ENCODE measurements at regions of chr3 and their contacts with region 1.

Region 1: DNA sequence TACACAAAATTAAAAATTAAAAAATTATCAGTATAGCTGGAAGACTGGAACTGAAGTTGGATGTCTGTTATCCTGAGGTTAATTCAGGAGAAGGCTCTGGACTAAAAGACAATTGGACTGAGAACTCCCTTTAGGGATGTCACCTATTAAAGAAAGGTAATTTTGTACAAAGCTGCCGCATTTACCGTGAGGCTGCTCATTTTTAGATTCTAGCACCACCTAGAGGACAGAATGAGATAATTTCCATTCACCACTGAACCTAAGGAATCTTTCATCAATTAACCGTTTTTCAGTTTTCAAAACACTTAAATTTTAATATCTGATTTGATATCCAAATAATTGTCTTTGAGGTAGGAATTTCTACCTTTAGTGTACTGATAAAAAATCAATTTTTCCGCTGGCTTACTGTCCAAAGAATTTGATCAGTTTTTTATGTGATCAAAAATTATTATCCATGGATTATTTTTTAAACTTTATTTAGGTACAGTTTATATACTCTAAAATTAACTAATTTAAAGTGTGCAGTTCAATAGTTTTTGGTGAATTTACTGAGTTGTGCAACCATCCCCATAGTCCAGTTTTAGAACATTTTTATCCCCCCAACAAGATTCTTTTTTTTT is 106.7 kb upstream of the TNIK start:
- DNase-seq: peak; percentile 10
- H3K4me3 ChIP-seq: no peak overlapping the region
- H3K27ac ChIP-seq: no peak overlapping the region
- H3K27me3 ChIP-seq: no peaks in the 10 kb centered on the region
- CTCF ChIP-seq: peak; percentile 70

Region 2: DNA sequence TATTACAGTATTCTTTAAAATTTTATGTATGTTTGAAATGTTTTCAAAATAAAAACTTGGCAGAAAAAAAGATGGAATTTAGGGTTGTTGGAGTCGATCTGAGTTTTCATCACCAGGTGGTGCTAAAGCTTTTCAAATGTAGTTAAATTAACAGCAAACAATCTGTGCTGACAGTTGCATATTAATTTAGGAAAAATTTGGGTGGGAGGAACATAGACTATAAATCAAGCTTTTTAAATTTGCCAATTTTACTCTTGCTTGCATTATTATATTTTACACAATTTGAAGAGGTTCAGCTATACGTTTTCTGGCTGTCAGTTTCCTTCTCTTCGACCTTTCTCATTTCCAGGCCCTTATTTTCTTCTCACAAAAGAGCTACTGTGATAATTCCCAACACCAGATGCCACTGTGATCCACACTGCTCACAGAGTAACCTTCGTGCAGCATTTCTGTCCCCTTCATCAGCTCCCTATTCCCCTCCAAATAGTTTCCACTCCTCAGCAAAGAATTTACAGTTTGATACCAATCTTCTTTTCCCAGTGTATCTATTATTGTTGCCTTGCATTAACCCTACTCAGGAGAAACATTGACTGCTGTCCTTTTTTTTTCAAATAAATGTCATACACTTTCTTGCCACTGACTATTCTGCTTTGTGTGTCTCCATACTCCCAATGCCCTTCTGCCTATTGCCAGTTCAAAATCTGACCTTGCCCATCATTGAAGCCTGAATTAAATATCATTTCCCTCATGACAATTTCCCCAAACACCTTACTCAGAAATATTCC is 605.1 kb before region 1 on chr3:
- CTCF ChIA-PET with region 1: interaction called, 62 read pairs
- POLR2A ChIA-PET with region 1: no interaction called
- DNase-seq: peak; percentile 10
- H3K4me3 ChIP-seq: no peak overlapping the region
- H3K27ac ChIP-seq: no peak overlapping the region
- H3K27me3 ChIP-seq: no peaks in the 10 kb centered on the region
- CTCF ChIP-seq: peak; percentile 65

Region 3: GRCh38 chr3:171049861-171050444 is 517.0 kb before region 1 on chr3:
- CTCF ChIA-PET with region 1: interaction called, 30 read pairs
- POLR2A ChIA-PET with region 1: no interaction called
- DNase-seq: no peak
- H3K4me3 ChIP-seq: no peak overlapping the region
- H3K27ac ChIP-seq: no peak overlapping the region
- H3K27me3 ChIP-seq: no peaks in the 10 kb centered on the region
- CTCF ChIP-seq: peak; percentile 77

Region 4: GRCh38 chr3:171187706-171188290 is 379.1 kb before region 1 on chr3:
- CTCF ChIA-PET with region 1: interaction called, 63 read pairs
- POLR2A ChIA-PET with region 1: no interaction called
- DNase-seq: no peak
- H3K4me3 ChIP-seq: no peak overlapping the region
- H3K27ac ChIP-seq: no peak overlapping the region
- H3K27me3 ChIP-seq: no peaks in the 10 kb centered on the region
- CTCF ChIP-seq: peak; percentile 77

Region 5: DNA sequence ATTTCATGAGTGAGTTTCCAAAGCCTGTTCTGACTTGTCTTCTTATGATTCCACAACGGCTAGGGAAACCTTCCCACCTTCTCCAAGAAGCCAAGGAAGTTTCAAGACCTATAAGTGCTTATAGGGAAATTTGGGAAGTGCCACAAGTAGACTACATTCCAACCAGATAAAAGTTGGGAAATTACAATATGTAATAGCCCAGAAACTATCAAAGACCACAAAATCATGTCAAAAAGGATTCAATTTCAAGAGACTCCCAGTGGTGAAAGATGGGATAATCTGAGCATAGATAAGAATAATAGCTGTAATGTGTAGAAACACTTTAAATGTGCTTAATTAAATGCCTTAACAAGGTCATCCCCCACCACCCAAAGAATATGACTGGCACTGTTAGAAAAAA is 371.2 kb before region 1 on chr3:
- CTCF ChIA-PET with region 1: interaction called, 10 read pairs
- POLR2A ChIA-PET with region 1: no interaction called
- DNase-seq: no peak
- H3K4me3 ChIP-seq: no peak overlapping the region
- H3K27ac ChIP-seq: no peak overlapping the region
- H3K27me3 ChIP-seq: no peaks in the 10 kb centered on the region
- CTCF ChIP-seq: peak; percentile 26; the same call in 1 of the 2 replicates

Region 6: DNA sequence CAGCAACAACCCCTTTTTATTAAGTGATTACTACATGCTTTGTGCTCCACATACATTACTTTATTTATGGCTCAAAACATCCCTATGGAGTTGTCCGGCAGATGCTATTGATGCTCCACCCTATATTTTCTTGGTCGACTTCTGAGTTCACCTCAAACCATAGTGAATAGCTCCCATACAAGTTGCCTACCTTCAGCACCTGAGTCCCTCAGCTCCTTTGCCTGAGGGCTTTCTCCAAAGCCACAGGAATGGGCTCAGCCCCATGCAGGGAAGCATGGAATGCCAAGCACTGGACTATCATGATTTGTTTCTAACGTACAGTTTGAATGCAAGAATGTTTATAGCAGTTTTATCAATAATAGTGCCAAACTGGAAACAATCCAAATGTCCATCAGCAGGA is 18.1 kb after region 1 on chr3:
- CTCF ChIA-PET with region 1: no interaction called
- POLR2A ChIA-PET with region 1: no interaction called
- DNase-seq: no peak
- H3K4me3 ChIP-seq: no peak overlapping the region
- H3K27ac ChIP-seq: no peak overlapping the region
- H3K27me3 ChIP-seq: peaks cover 2% of the 10 kb centered on the region
- CTCF ChIP-seq: no peak